ENCODE measurements at regions of chr5 and their contacts with region 1.

Region 1: DNA sequence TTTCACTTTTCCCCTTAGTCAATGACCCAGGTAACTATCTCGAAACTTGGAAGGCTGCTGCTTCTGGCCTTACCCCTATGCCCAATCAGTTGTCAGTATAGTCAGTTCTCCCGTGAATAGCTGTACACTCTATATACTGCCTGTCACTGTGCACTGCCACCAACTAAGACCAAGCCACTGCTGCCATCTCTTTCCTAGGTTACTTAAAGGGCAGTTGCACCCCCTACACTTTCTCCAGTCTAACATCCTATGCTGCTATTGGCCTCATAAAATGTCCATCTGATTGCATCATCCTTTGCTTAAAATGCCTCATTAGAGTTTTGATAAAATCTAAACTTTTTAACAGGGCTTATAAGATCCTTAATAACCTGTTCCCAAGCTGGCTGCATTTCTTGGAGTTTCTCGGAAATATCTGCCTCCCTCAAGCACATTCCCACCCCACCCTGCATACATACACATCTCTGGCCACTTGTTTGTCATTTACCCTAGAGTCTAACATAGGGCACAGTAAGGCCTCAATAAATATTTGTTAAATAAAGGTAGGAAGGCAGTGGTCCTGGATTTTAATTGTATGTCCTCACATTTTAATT is 32.8 kb upstream of the TNFAIP8 start:
- DNase-seq: peak; percentile 29
- H3K4me3 ChIP-seq: no peak overlapping the region
- H3K27ac ChIP-seq: peak overlapping the region; percentile 91
- H3K4me1 ChIP-seq: peaks cover 19% of the 10 kb centered on the region
- H3K27me3 ChIP-seq: no peaks in the 10 kb centered on the region
- CTCF ChIP-seq: no peak
- POLR2A ChIP-seq: no peak

Region 2: GRCh38 chr5:119070828-119071572 is 252.0 kb before region 1 on chr5 and contains the start of gene DMXL1:
- CTCF ChIA-PET with region 1: no interaction called
- POLR2A ChIA-PET with region 1: no interaction called
- dilution Hi-C with region 1: no loop called
- intact Hi-C with region 1: loop called (anchors 2 kb)
- DNase-seq: peak; percentile 100
- H3K4me3 ChIP-seq: peak within 1 kb of the TSS; percentile 61 to 100 (median 74)
- H3K27ac ChIP-seq: peak within 1 kb of the TSS; percentile 64
- H3K4me1 ChIP-seq: peaks cover 9% of the 10 kb centered on the region
- H3K27me3 ChIP-seq: no peaks in the 10 kb centered on the region
- CTCF ChIP-seq: no peak
- POLR2A ChIP-seq: peak; percentile 6
- total RNA-seq, gene DMXL1: 24.7 and 26.1 TPM in 2 replicates

Region 3: DNA sequence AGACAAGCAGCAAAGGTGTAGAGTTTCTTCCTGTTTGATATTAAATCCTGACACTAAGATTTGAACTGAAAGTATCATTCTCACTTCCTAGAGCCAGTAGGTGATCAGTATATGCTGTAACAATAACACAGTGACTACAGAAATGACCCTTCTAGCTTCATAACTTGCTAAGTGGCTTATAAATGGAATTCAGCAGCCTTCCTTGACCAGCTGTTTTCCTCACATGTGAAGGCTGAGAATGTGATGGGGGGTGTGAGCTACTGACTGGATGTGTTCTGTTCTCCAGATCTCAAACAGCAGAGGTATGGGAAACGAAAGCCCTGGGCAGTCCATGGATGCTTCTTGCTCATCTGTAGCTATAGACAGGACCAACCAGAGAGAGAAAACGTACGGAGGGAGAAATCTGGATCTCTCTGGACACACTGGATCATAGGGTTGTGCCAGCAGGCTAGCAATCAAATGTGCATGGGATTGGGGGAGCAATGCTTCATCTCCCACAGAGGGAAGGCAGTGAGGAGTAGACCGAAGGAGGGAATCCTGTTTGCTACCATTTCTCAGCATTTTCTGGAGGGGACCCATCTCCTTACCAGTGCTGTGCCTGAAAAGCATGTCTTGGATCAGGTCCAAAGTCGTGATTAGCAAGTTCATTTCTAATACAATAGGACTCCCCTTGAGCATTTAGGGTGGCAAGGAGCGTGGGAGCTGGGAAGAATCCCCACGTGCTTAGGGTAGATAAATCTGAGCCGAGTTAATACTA is 72.2 kb after region 1 on chr5:
- CTCF ChIA-PET with region 1: no interaction called
- POLR2A ChIA-PET with region 1: no interaction called
- dilution Hi-C with region 1: no loop called
- intact Hi-C with region 1: loop called (anchors 2 kb)
- DNase-seq: no peak
- H3K4me3 ChIP-seq: no peak overlapping the region
- H3K27ac ChIP-seq: no peak overlapping the region
- H3K4me1 ChIP-seq: peaks cover 25% of the 10 kb centered on the region
- H3K27me3 ChIP-seq: no peaks in the 10 kb centered on the region
- CTCF ChIP-seq: no peak
- POLR2A ChIP-seq: no peak

Measured in endothelial cell of umbilical vein (primary cell).